H1 (cell line): ENCODE measurements at regions of chr2 and their contacts with region 1.

Region 1: DNA sequence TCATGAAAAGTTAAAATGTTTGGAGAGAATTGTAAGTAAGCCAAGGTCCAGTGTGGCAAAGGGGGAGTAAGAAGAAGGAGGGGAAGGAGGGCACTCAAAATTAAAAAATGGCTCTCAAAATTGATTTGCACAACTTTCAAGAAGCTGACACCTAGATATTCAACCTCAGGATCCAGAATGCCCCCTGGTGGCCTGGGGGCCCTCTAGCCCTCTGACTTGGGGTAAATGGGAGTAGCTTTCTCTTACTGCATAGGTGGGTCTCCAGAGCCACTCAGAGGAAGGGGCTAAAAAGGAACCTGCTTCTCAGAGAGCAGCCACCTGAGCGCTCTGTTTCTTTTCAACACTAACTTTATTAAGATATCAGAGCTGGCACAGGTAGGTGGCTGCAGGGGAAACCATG is 968.5 kb downstream of the BCL11A start:
- DNase-seq: peak; percentile 59 to 69
- H3K4me3 ChIP-seq: no peak overlapping the region
- H3K27ac ChIP-seq: no peak overlapping the region
- H3K4me1 ChIP-seq: no peaks in the 10 kb centered on the region
- H3K27me3 ChIP-seq: no peaks in the 10 kb centered on the region
- CTCF ChIP-seq: peak; percentile 57 to 80 (median 69)
- EP300 ChIP-seq: no peak
- POLR2A ChIP-seq: no peak
- RAD21 ChIP-seq: peak; percentile 78 to 86

Region 2: DNA sequence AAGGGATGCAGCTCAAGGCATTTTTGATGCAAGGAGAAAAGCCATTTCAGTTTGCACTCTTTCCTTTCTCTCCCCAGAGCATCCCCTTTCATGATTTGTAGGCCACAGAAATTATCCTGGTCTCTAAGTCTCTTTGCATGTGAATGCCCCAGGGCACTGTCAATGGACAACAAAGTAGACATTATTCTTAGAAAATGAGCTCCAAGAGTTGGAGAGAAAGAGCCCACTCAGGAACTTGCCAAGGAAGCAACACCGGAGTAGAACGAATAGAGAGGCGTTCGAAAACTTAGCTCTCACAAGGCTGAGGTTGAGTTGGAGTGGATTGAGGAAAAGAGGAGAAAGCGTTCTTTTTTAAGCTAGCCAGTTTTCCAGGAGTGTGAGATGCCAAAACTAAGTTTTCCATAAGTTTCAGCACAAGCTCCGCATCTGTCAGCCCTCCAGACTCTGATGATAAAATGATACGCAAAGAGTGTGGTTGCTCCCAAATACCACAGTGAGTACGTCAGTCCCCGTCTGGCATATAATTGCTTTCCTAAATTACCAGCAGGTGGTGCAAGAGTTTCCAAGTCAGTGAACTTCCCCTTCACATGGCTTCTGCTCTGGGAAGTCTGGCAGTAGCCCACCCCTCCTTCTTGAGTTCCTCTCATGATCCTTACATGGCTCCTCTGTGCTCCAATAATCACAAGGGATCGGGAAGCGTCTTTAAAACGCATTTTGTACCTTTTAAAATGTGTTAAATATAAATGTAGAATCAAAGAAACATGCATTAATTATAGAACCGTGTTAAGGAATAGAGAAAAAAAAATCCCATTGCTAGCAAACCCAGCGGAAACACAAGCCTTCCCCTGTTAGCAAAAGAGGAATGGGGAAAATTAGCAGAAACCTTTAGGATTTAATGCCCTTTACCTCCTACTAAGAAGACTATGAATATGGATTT is 283.2 kb before region 1 on chr2:
- CTCF ChIA-PET with region 1: interaction called, 14 read pairs
- POLR2A ChIA-PET with region 1: no interaction called
- DNase-seq: peak in 1 of 2 experiments; percentile 54
- H3K4me3 ChIP-seq: no peak overlapping the region
- H3K27ac ChIP-seq: no peak overlapping the region
- H3K4me1 ChIP-seq: peaks cover 0 to 5% (median 0%) of the 10 kb centered on the region in 4 experiments; a peak in 3 of 7 replicates
- H3K27me3 ChIP-seq: no peaks in the 10 kb centered on the region
- CTCF ChIP-seq: peak; percentile 17 to 80 (median 72)
- EP300 ChIP-seq: no peak
- POLR2A ChIP-seq: no peak
- RAD21 ChIP-seq: peak; percentile 78 to 85

Region 3: DNA sequence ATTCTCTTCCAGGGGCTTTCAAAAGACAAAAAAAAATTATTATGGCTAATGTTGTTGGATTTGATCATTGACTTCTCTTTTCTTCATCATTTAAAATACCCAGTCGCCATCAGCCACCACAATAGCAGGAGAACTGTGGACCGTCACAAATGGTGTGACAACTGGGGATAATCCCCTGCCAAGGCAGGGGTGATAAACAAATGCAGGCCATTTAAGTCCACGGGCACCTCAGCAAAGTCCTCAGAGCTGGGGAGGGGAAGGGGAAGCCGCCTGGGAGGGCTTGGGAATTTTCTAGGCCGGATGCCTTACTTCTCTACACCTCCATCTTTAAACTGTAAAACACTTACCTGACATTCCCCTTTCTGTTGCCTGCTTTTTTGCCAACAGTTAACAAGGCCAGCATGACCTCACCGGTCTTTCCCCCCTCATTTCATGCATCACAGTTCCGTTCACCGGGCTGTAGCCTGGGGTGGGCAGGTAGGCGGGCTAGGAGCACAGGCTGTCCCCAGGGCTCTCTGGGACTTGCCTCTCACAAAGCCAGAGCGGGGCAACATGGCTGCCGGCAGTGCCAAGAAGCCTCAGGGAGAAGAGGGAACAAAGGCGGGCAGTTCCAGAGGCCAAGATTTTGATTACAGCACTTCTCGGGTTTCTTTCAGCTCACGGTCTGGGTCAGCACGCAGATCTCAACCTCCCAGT is 148.1 kb after region 1 on chr2:
- CTCF ChIA-PET with region 1: no interaction called
- POLR2A ChIA-PET with region 1: no interaction called
- DNase-seq: no peak
- H3K4me3 ChIP-seq: no peak overlapping the region
- H3K27ac ChIP-seq: no peak overlapping the region
- H3K4me1 ChIP-seq: no peaks in the 10 kb centered on the region; a peak in 2 of 7 replicates
- H3K27me3 ChIP-seq: no peaks in the 10 kb centered on the region
- CTCF ChIP-seq: no peak
- EP300 ChIP-seq: no peak
- POLR2A ChIP-seq: no peak
- RAD21 ChIP-seq: no peak